Mammary epithelial cell (primary cell): ENCODE measurements at regions of chrX and their contacts with region 1.

Region 1: GRCh38 chrX:115013705-115014104 is 3.7 kb downstream of the IL13RA2 start:
- DNase-seq: peak; percentile 48
- H3K4me3 ChIP-seq: no peak overlapping the region
- H3K27ac ChIP-seq: peak overlapping the region; percentile 69
- H3K4me1 ChIP-seq: peaks cover 2% of the 10 kb centered on the region
- H3K27me3 ChIP-seq: no peaks in the 10 kb centered on the region
- CTCF ChIP-seq: no peak

Region 2: DNA sequence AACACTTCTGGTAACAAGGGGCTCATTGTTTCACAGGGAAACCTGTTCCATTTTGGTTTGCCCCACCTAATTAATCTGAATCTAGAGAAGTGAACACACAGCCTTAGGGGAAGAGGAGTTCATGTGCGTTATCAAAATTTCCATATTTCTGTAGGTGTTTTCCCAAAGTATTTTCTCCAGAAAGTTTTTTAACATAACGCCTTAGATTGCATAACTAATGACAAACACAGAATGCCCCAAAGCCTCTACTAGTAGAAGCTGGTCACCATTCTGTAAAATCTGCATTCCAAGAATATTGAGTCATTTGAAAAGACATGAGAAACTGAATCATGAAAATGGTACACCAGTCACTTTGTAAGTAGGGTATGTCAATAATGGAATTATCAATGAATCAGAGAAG is 37.4 kb before region 1 on chrX:
- CTCF ChIA-PET with region 1: no interaction called
- dilution Hi-C with region 1: no loop called
- in situ Hi-C with region 1: no loop called
- intact Hi-C with region 1: loop called (anchors 5 kb)
- DNase-seq: peak; percentile 88
- H3K4me3 ChIP-seq: no peak overlapping the region
- H3K27ac ChIP-seq: peak overlapping the region; percentile 87
- H3K4me1 ChIP-seq: peaks cover 7% of the 10 kb centered on the region
- H3K27me3 ChIP-seq: no peaks in the 10 kb centered on the region
- CTCF ChIP-seq: no peak

Region 3: DNA sequence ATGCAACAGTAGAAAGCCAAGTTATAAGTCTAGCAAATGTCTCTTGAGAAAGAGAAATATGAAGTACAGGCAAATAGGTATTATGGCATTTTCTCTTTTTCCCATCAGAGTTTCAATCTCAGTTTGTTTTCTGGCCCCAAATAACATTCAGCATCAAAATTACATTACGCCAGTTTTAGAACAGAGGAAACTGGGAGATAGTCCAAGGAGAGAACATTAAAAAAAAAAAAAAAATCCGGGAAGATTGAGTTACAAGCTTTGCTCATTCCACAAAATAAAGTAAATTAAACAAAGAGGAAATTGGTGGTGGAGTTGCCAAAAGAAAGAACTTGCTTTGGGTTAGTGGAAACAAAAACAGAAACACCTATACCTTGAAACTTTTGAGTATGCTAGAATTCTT is 54.1 kb after region 1 on chrX:
- CTCF ChIA-PET with region 1: no interaction called
- dilution Hi-C with region 1: no loop called
- in situ Hi-C with region 1: no loop called
- intact Hi-C with region 1: no loop called
- DNase-seq: no peak
- H3K4me3 ChIP-seq: no peak overlapping the region
- H3K27ac ChIP-seq: no peak overlapping the region
- H3K4me1 ChIP-seq: no peaks in the 10 kb centered on the region
- H3K27me3 ChIP-seq: no peaks in the 10 kb centered on the region
- CTCF ChIP-seq: no peak